ENCODE measurements at regions of chr19 and their contacts with region 1.

Region 1: DNA sequence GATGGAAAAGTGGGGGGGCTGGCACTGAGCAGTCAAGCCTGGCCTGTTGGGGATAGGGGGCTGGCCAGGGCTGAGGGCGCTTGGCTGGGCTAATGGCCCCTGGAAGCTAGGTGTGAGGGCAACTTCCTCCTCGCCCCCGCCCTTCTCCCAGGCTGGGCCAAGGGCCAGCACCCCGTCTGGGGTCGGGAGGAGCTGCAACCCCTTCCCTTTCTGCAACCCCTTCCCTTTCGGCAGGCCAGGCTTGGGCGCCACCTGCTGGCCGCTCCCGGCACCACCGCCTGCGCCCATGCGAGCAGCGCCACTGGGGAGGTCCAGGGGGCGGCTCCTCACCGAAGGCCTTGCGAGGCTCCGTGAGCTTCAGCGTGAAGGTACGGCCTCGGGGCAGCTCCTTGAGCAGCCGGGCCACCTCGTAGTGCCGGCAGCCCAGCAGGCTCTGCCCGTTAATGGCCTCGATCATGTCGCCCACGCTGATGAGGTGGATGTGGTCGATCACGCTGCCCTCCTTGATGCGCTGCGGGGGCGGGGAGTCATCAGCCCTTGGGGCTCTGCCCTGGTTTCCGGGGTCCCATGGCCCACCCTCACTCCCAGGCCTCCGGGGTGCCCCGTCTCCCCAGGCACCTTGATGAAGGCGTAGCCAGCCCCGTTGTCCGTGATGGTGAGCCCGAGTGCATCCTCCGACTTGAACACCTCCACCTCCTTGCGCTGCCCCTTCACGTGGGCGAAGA is 5.0 kb upstream of the PTGER1 start:
- DNase-seq: peak; percentile 61 to 78 (median 78)
- H3K4me3 ChIP-seq: peak overlapping the region in 2 of 7 experiments; percentile 11 to 19
- H3K27ac ChIP-seq: no peak overlapping the region
- H3K4me1 ChIP-seq: peaks cover 0 to 34% (median 27%) of the 10 kb centered on the region in 4 experiments
- H3K27me3 ChIP-seq: peaks cover 0 to 8% (median under 1%) of the 10 kb centered on the region in 5 experiments

Region 2: GRCh38 chr19:14432791-14433553 is 47.2 kb before region 1 on chr19 and contains the start of gene PKN1:
- CTCF ChIA-PET with region 1: interaction called, 34 read pairs
- POLR2A ChIA-PET with region 1: interaction called, 4 read pairs
- DNase-seq: peak; percentile 45 to 56 (median 51)
- H3K4me3 ChIP-seq: peak within 1 kb of the TSS; percentile 66 to 84 (median 79)
- H3K27ac ChIP-seq: peak within 1 kb of the TSS in 1 of 2 experiments; percentile 73
- H3K4me1 ChIP-seq: peaks cover 0 to 33% (median 31%) of the 10 kb centered on the region in 4 experiments
- H3K27me3 ChIP-seq: no peaks in the 10 kb centered on the region

Region 3: GRCh38 chr19:14467816-14468215 is 12.3 kb before region 1 on chr19:
- CTCF ChIA-PET with region 1: interaction called, 17 read pairs
- POLR2A ChIA-PET with region 1: interaction called, 3 read pairs
- DNase-seq: peak in 2 of 3 donors; percentile 50 to 73
- H3K4me3 ChIP-seq: no peak overlapping the region
- H3K27ac ChIP-seq: no peak overlapping the region
- H3K4me1 ChIP-seq: peaks cover 0 to 11% (median 11%) of the 10 kb centered on the region in 4 experiments
- H3K27me3 ChIP-seq: peaks cover 0 to 6% (median under 1%) of the 10 kb centered on the region in 5 experiments

Region 4: GRCh38 chr19:14496028-14496833 is 16.1 kb after region 1 on chr19 and contains the start of gene GIPC1:
- CTCF ChIA-PET with region 1: interaction called, 50 read pairs
- POLR2A ChIA-PET with region 1: no interaction called
- DNase-seq: peak; percentile 75 to 86 (median 81)
- H3K4me3 ChIP-seq: peak within 1 kb of the TSS; percentile 49 to 85 (median 73)
- H3K27ac ChIP-seq: peak within 1 kb of the TSS in 1 of 2 experiments; percentile 43
- H3K4me1 ChIP-seq: peaks cover 0 to 20% (median 16%) of the 10 kb centered on the region in 4 experiments
- H3K27me3 ChIP-seq: no peaks in the 10 kb centered on the region

Region 5: DNA sequence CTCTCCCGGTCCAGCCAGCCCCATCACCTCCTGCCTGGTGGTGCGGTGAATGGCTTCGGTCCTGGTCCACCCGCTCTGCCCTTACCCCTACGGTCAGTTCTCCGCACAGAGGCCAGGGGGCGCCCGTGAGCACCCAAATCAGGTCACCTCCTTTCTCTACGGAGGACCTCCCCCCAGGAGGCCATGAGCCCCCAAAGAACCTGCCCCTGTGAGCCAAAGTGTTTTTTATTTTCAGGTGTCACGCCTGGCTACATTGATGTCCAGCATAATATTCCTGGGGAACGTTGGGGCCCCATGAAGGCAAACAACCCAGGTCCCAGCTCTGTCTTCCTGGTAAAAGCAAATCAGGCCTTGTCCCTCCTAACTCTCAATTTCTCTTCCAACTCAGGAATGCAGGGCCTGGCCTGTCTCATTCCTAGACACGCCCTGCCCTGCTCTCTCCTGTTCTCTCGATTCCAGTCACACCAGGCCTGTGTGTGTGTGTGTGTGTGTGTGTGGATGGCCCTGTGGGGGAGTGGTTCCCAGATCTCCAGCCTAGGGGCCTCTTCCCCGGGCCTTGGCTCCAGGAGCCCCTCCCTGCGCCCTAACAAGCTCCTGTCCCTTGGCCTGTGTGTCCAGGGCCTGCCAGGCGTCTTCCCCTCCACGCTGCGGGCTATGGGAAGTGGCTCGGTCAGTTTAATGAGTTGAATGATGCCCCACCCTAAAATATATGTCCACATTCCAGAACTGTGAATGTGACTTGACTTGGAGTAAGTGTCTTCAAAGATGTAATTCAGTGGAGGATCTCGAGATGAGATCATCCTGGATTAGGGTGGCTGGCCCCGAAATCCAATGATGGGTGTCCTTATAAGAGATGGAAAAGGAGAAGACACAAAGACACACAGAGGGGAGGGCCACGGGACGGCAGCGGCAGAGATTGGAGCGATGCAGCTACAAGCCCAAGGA is 25.6 kb after region 1 on chr19:
- CTCF ChIA-PET with region 1: interaction called, 12 read pairs
- POLR2A ChIA-PET with region 1: no interaction called
- DNase-seq: peak; percentile 63 to 81 (median 76)
- H3K4me3 ChIP-seq: no peak overlapping the region
- H3K27ac ChIP-seq: no peak overlapping the region
- H3K4me1 ChIP-seq: peaks cover 5 to 11% (median 6%) of the 10 kb centered on the region in 4 experiments
- H3K27me3 ChIP-seq: no peaks in the 10 kb centered on the region

Region 6: DNA sequence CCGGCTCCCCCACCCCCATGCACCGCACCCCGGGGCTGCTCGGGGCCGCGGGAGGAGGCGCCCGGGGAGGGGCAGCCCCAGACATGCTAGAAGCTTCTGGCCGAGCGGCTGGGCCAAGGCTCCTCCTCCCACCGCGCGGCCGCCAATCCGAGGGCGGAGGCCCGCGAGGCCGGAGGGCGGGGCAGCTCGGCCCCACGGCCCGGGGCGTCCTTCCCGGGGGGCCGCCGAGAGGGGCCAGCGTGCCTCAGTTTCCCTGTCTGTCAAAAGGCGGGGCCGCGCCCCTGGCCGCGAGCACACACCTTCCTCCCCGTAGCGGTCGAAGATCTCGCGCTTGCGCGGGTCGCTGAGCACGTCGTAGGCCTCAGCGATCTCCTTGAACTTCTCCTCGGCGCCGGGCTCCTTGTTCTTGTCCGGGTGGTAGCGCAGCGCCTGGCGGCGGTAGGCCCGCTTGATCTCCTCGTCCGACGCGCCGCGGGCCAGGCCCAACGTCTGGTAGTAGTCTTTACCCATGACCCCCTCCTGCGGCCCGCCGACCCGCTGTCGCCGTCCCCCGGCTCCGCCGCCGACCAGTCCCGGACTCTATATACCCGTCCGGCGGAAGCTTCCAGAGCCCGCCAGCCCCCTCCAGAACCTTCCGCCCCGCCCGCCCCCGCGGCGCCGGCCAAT is 37.8 kb after region 1 on chr19 and contains the start of gene DNAJB1:
- CTCF ChIA-PET with region 1: interaction called, 3 read pairs
- POLR2A ChIA-PET with region 1: interaction called, 11 read pairs
- DNase-seq: peak in 1 of 3 donors; percentile 45
- H3K4me3 ChIP-seq: peak within 1 kb of the TSS; percentile 85 to 96 (median 93)
- H3K27ac ChIP-seq: peak within 1 kb of the TSS; percentile 93 to 96
- H3K4me1 ChIP-seq: peaks cover 2 to 49% (median 26%) of the 10 kb centered on the region in 4 experiments
- H3K27me3 ChIP-seq: no peaks in the 10 kb centered on the region